ENCODE measurements at regions of chr4 and their contacts with region 1.

Region 1: GRCh38 chr4:73069338-73070073 is at the start of gene COX18:
- DNase-seq: peak; percentile 89 to 99 (median 93)
- ATAC-seq: peak; percentile 74
- H3K4me3 ChIP-seq: peak within 1 kb of the TSS; percentile 69 to 83
- H3K4me3 Mint-ChIP-seq: peak within 1 kb of the TSS; percentile 95
- H3K27ac ChIP-seq: peak within 1 kb of the TSS; percentile 97 to 99
- H3K27ac Mint-ChIP-seq: peak within 1 kb of the TSS; percentile 97
- H3K4me1 ChIP-seq: peaks cover 33% of the 10 kb centered on the region
- H3K4me1 Mint-ChIP-seq: peaks cover 49% of the 10 kb centered on the region
- H3K27me3 ChIP-seq: no peaks in the 10 kb centered on the region
- H3K27me3 Mint-ChIP-seq: no peaks in the 10 kb centered on the region
- CTCF ChIP-seq: no peak
- total RNA-seq, gene COX18: 6.7 to 7.2 TPM

Region 2: DNA sequence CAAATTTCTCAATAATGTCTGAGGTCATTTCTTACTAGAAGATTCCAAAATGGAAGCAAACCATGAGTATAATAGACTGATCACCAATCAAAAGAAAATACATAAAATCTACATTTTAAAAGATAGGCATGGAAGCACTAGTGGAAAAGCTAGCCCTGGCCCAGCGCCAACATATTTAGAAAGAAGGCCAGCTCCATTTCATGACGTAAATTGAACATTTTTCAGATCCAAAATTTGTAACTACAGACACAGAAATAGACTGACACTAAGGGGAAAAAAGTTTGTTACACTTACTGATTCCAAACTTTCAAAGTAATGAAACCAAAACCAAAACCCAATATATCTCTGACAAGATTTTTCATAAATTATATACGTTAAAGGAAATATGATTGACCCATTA is 618.2 kb before region 1 on chr4:
- CTCF ChIA-PET with region 1: no interaction called
- POLR2A ChIA-PET with region 1: no interaction called
- intact Hi-C with region 1: no loop called
- DNase-seq: no peak
- ATAC-seq: no peak
- H3K4me3 ChIP-seq: no peak overlapping the region
- H3K4me3 Mint-ChIP-seq: no peak overlapping the region
- H3K27ac ChIP-seq: no peak overlapping the region
- H3K27ac Mint-ChIP-seq: no peak overlapping the region
- H3K4me1 ChIP-seq: no peaks in the 10 kb centered on the region
- H3K4me1 Mint-ChIP-seq: no peaks in the 10 kb centered on the region
- H3K27me3 ChIP-seq: no peaks in the 10 kb centered on the region
- H3K27me3 Mint-ChIP-seq: no peaks in the 10 kb centered on the region
- CTCF ChIP-seq: no peak

Region 3: DNA sequence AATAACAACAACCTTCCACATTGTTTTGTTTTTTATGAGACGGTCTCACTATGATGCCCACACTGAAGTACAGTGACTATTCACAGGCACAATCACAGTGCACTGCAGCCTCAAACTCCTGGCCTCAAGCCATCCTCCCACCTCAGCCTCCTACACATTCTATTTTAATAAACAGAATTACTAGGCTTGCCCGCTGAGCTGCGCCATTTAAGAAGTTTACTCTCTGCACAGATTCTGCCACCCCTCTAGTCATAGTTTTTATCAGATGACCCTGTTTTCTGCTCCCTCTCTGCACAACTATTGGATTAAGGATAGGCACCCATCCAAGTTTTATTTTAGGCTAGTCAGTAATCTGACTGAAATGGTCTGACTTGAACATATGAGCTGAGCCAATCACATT is 11.3 kb after region 1 on chr4:
- CTCF ChIA-PET with region 1: no interaction called
- POLR2A ChIA-PET with region 1: interaction called, 13 read pairs
- intact Hi-C with region 1: no loop called
- DNase-seq: no peak
- ATAC-seq: no peak
- H3K4me3 ChIP-seq: no peak overlapping the region
- H3K4me3 Mint-ChIP-seq: no peak overlapping the region
- H3K27ac ChIP-seq: no peak overlapping the region
- H3K27ac Mint-ChIP-seq: peak overlapping the region; percentile 41
- H3K4me1 ChIP-seq: no peaks in the 10 kb centered on the region
- H3K4me1 Mint-ChIP-seq: peaks cover 3% of the 10 kb centered on the region
- H3K27me3 ChIP-seq: no peaks in the 10 kb centered on the region
- H3K27me3 Mint-ChIP-seq: no peaks in the 10 kb centered on the region
- CTCF ChIP-seq: no peak

Region 4: GRCh38 chr4:73099143-73099542 is 29.6 kb after region 1 on chr4:
- CTCF ChIA-PET with region 1: no interaction called
- POLR2A ChIA-PET with region 1: no interaction called
- intact Hi-C with region 1: loop called in 1 of 2 experiments (anchors 5 kb)
- DNase-seq: no peak
- ATAC-seq: no peak
- H3K4me3 ChIP-seq: no peak overlapping the region
- H3K4me3 Mint-ChIP-seq: no peak overlapping the region
- H3K27ac ChIP-seq: no peak overlapping the region
- H3K27ac Mint-ChIP-seq: peak overlapping the region; percentile 70
- H3K4me1 ChIP-seq: no peaks in the 10 kb centered on the region
- H3K4me1 Mint-ChIP-seq: no peaks in the 10 kb centered on the region
- H3K27me3 ChIP-seq: no peaks in the 10 kb centered on the region
- H3K27me3 Mint-ChIP-seq: no peaks in the 10 kb centered on the region
- CTCF ChIP-seq: no peak

Region 5: GRCh38 chr4:73222466-73223257 is 153.2 kb after region 1 on chr4:
- CTCF ChIA-PET with region 1: no interaction called
- POLR2A ChIA-PET with region 1: no interaction called
- intact Hi-C with region 1: loop called (anchors 2 to 10 kb)
- DNase-seq: peak; percentile 12 to 89 (median 52)
- ATAC-seq: peak; percentile 100
- H3K4me3 ChIP-seq: peak overlapping the region; percentile 50 to 59
- H3K4me3 Mint-ChIP-seq: no peak overlapping the region
- H3K27ac ChIP-seq: peak overlapping the region; percentile 71 to 86
- H3K27ac Mint-ChIP-seq: no peak overlapping the region
- H3K4me1 ChIP-seq: peaks cover 20% of the 10 kb centered on the region
- H3K4me1 Mint-ChIP-seq: peaks cover 41% of the 10 kb centered on the region
- H3K27me3 ChIP-seq: no peaks in the 10 kb centered on the region
- H3K27me3 Mint-ChIP-seq: no peaks in the 10 kb centered on the region
- CTCF ChIP-seq: no peak

Region 6: GRCh38 chr4:73258686-73259570 is 189.4 kb after region 1 on chr4 and contains the start of gene ANKRD17:
- CTCF ChIA-PET with region 1: interaction called, 5 read pairs
- POLR2A ChIA-PET with region 1: interaction called, 24 read pairs
- intact Hi-C with region 1: loop called (anchors 1 kb)
- DNase-seq: peak; percentile 75 to 95 (median 89)
- ATAC-seq: peak; percentile 72
- H3K4me3 ChIP-seq: peak within 1 kb of the TSS; percentile 67 to 69
- H3K4me3 Mint-ChIP-seq: peak within 1 kb of the TSS; percentile 100
- H3K27ac ChIP-seq: peak within 1 kb of the TSS; percentile 94 to 95
- H3K27ac Mint-ChIP-seq: peak within 1 kb of the TSS; percentile 100
- H3K4me1 ChIP-seq: peaks cover 40% of the 10 kb centered on the region
- H3K4me1 Mint-ChIP-seq: peaks cover 72% of the 10 kb centered on the region
- H3K27me3 ChIP-seq: no peaks in the 10 kb centered on the region
- H3K27me3 Mint-ChIP-seq: no peaks in the 10 kb centered on the region
- CTCF ChIP-seq: no peak
- total RNA-seq, gene ANKRD17: 29.6 to 29.7 TPM

Region 7: DNA sequence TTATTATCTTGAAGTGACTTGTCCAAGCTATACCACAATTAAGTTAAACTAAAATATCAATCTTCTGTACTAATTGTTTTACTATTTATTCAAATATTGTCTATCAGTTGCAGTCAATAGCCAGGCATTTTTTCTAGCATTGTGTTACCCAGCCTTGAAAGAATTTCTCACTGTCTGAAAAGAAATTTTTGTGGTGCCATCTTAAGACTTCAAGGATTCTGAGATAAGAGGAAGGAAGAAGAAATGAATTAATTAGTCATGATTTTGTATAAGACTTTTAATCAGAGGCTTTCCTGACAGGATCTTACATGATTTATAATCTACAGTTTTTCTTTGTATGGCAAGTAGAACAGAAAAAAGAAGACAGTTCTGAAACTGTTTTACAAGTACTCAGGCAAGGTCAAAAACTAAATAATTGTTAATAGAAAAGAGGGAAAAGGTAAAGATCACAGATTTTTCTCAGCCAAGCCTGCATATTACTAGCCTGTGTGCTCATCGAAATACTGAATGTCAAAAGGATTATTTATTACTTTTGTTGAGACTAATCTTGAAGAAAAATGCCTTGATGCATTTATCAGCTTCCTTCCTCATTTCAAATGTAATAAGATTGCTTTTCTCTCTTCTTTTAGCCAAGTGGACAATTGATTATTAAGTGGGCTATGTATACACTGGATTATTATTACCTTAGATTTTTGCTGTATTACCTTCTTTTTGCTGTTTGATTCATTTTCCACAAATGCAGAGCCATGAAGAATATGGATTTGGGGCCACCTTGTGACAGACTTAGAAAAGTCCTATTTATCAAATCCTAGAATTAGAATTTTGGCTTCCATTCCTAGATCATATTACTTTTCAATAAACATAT is 853.5 kb after region 1 on chr4:
- CTCF ChIA-PET with region 1: no interaction called
- POLR2A ChIA-PET with region 1: no interaction called
- intact Hi-C with region 1: no loop called
- DNase-seq: no peak
- ATAC-seq: no peak
- H3K4me3 ChIP-seq: no peak overlapping the region
- H3K4me3 Mint-ChIP-seq: no peak overlapping the region
- H3K27ac ChIP-seq: no peak overlapping the region
- H3K27ac Mint-ChIP-seq: no peak overlapping the region
- H3K4me1 ChIP-seq: no peaks in the 10 kb centered on the region
- H3K4me1 Mint-ChIP-seq: no peaks in the 10 kb centered on the region
- H3K27me3 ChIP-seq: no peaks in the 10 kb centered on the region
- H3K27me3 Mint-ChIP-seq: no peaks in the 10 kb centered on the region
- CTCF ChIP-seq: no peak

Region 8: DNA sequence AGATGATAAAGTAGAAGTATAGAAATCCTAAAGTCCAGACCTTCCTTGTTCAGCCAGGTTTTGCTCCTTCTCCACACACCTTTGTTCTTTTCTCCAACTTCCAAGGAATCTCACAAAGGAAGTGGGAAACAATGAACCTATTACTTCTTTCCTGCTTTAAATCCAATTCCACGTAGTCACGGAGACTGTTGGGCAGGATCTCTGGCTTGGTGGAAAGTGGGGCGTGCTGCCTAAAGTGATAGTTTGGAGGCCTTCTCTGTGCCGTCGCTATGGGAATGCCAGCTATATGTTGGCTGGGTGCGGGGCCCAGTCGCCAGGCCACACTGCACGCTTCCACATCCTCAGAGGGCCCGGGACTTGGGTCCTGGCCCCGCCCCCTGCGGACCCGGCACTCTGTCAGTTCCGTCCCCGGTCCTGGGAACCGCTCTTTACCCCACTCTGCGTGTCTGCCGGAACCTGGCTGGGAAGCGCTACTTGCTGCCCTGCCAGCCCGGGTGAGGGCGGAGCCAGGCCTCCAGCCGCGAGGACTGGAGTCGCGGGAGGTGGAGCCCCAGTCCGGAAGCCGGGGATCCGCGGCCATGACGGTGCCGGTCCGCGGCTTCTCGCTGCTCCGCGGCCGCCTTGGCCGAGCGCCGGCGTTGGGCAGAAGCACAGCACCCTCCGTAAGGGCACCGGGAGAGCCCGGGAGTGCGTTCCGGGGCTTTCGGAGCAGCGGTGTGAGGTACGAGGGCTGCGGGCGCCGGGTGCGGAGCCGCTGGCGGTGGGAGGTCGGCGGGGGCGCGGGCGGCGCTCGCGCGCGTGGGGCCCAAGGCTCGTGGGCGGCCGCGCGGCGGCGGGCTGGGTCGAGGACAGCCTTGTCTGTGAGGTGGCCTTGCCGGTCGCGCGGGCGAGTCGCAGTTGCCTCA is 1088.3 kb after region 1 on chr4 and contains the start of gene MTHFD2L:
- CTCF ChIA-PET with region 1: no interaction called
- POLR2A ChIA-PET with region 1: no interaction called
- intact Hi-C with region 1: loop called in 1 of 2 experiments (anchors 10 kb)
- DNase-seq: peak; percentile 44 to 88 (median 76)
- ATAC-seq: peak; percentile 96
- H3K4me3 ChIP-seq: peak within 1 kb of the TSS; percentile 58 to 77
- H3K4me3 Mint-ChIP-seq: peak within 1 kb of the TSS; percentile 93
- H3K27ac ChIP-seq: peak within 1 kb of the TSS; percentile 62 to 70
- H3K27ac Mint-ChIP-seq: peak within 1 kb of the TSS; percentile 92
- H3K4me1 ChIP-seq: peaks cover 19% of the 10 kb centered on the region
- H3K4me1 Mint-ChIP-seq: peaks cover 27% of the 10 kb centered on the region
- H3K27me3 ChIP-seq: no peaks in the 10 kb centered on the region
- H3K27me3 Mint-ChIP-seq: no peaks in the 10 kb centered on the region
- CTCF ChIP-seq: no peak
- total RNA-seq, gene MTHFD2L: 10.7 to 11.3 TPM

Region 9: GRCh38 chr4:74444891-74445642 is 1375.6 kb after region 1 on chr4 and contains the start of gene AREG:
- CTCF ChIA-PET with region 1: no interaction called
- POLR2A ChIA-PET with region 1: no interaction called
- intact Hi-C with region 1: loop called (anchors 10 kb)
- DNase-seq: peak; percentile 78 to 97 (median 89)
- ATAC-seq: peak; percentile 95
- H3K4me3 ChIP-seq: peak within 1 kb of the TSS; percentile 77 to 79
- H3K4me3 Mint-ChIP-seq: peak within 1 kb of the TSS; percentile 96
- H3K27ac ChIP-seq: peak within 1 kb of the TSS; percentile 87 to 90
- H3K27ac Mint-ChIP-seq: peak within 1 kb of the TSS; percentile 96
- H3K4me1 ChIP-seq: peaks cover 5% of the 10 kb centered on the region
- H3K4me1 Mint-ChIP-seq: peaks cover 13% of the 10 kb centered on the region
- H3K27me3 ChIP-seq: no peaks in the 10 kb centered on the region
- H3K27me3 Mint-ChIP-seq: peaks cover 13% of the 10 kb centered on the region
- CTCF ChIP-seq: peak; percentile 64
- total RNA-seq, gene AREG: 52.8 to 53.2 TPM